ENCODE measurements at regions of chr12 and their contacts with region 1.

Region 1: GRCh38 chr12:88993651-88994050 is 358.6 kb downstream of the DUSP6 start:
- DNase-seq: peak; percentile 59 to 75 (median 75)
- H3K4me3 ChIP-seq: no peak overlapping the region
- H3K27ac ChIP-seq: no peak overlapping the region
- H3K4me1 ChIP-seq: peaks cover 0 to 4% (median 1%) of the 10 kb centered on the region in 4 experiments
- H3K27me3 ChIP-seq: no peaks in the 10 kb centered on the region

Region 2: GRCh38 chr12:88153959-88154358 is 839.7 kb before region 1 on chr12:
- CTCF ChIA-PET with region 1: interaction called, 19 read pairs
- POLR2A ChIA-PET with region 1: no interaction called
- DNase-seq: peak; percentile 38 to 66 (median 62)
- H3K4me3 ChIP-seq: no peak overlapping the region
- H3K27ac ChIP-seq: no peak overlapping the region
- H3K4me1 ChIP-seq: no peaks in the 10 kb centered on the region
- H3K27me3 ChIP-seq: no peaks in the 10 kb centered on the region

Region 3: GRCh38 chr12:88577537-88577936 is 416.1 kb before region 1 on chr12:
- CTCF ChIA-PET with region 1: no interaction called
- POLR2A ChIA-PET with region 1: no interaction called
- DNase-seq: peak in 2 of 3 donors; percentile 10 to 14
- H3K4me3 ChIP-seq: no peak overlapping the region
- H3K27ac ChIP-seq: no peak overlapping the region
- H3K4me1 ChIP-seq: peaks cover 0 to 25% (median 16%) of the 10 kb centered on the region in 4 experiments
- H3K27me3 ChIP-seq: peaks cover 0 to 37% (median 14%) of the 10 kb centered on the region in 5 experiments

Region 4: GRCh38 chr12:88633312-88633711 is 360.3 kb before region 1 on chr12:
- CTCF ChIA-PET with region 1: interaction called, 11 read pairs
- POLR2A ChIA-PET with region 1: no interaction called
- DNase-seq: peak in 1 of 3 donors; percentile 2
- H3K4me3 ChIP-seq: no peak overlapping the region
- H3K27ac ChIP-seq: no peak overlapping the region
- H3K4me1 ChIP-seq: no peaks in the 10 kb centered on the region
- H3K27me3 ChIP-seq: no peaks in the 10 kb centered on the region

Region 5: DNA sequence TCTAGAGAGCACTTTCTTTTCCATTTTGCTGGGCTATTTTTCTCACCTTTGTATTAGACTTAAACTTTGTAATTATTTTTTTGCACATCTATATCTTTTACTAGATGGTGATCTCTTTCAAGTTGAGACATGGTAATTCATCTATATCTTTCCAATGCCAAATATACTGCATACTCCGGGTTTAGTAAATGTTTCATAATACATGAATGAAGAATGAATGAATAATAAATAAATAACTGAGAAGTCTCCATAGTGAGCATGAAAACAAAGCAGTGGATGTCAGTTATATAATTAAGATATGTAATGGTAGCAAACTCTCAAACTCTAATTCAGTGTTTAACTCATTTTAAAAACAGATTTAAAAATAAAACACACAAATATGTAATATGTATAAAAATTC is 70.8 kb before region 1 on chr12:
- CTCF ChIA-PET with region 1: no interaction called
- POLR2A ChIA-PET with region 1: no interaction called
- DNase-seq: no peak
- H3K4me3 ChIP-seq: no peak overlapping the region
- H3K27ac ChIP-seq: no peak overlapping the region
- H3K4me1 ChIP-seq: no peaks in the 10 kb centered on the region
- H3K27me3 ChIP-seq: peaks cover 0 to 4% (median 0%) of the 10 kb centered on the region in 5 experiments

Region 6: GRCh38 chr12:89015419-89015818 is 21.8 kb after region 1 on chr12:
- CTCF ChIA-PET with region 1: no interaction called
- POLR2A ChIA-PET with region 1: no interaction called
- DNase-seq: no peak
- H3K4me3 ChIP-seq: no peak overlapping the region
- H3K27ac ChIP-seq: no peak overlapping the region
- H3K4me1 ChIP-seq: peaks cover 0 to 17% (median 9%) of the 10 kb centered on the region in 4 experiments
- H3K27me3 ChIP-seq: no peaks in the 10 kb centered on the region